ENCODE measurements at regions of chr14 and their contacts with region 1.

Region 1: DNA sequence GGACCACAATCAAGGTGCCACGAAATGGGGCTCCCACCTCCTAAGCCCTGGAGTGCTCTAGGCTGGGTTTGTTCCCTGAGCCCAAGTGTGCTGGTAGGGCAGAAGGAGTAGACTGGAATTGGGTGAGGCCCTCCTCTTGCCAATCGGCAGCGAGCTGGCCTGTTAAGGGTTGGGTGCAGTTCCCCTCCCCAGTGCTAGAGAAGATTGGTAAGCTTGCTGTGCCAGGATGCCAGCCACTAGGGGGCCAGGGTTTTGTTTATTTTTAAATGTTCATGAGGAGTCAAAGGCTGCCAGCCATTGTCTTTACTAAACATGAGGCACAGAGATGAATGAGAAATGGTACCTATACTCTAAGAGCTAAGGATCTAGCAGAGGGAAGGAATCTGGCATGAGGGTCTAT is 79.7 kb downstream of the SPTB start:
- DNase-seq: peak; percentile 53 to 62
- ATAC-seq: peak; percentile 30 to 71; a peak in 4 of 6 replicates
- H3K4me3 ChIP-seq: no peak overlapping the region
- H3K27ac ChIP-seq: peak overlapping the region; percentile 15 to 32; a peak in 1 of 6 replicates
- H3K4me1 ChIP-seq: peaks cover 17% of the 10 kb centered on the region
- CTCF ChIP-seq: peak; percentile 55
- EP300 ChIP-seq: no peak
- POLR2A ChIP-seq: no peak
- RAD21 ChIP-seq: peak in 1 of 2 experiments; percentile 30; a peak in 2 of 5 replicates

Region 2: DNA sequence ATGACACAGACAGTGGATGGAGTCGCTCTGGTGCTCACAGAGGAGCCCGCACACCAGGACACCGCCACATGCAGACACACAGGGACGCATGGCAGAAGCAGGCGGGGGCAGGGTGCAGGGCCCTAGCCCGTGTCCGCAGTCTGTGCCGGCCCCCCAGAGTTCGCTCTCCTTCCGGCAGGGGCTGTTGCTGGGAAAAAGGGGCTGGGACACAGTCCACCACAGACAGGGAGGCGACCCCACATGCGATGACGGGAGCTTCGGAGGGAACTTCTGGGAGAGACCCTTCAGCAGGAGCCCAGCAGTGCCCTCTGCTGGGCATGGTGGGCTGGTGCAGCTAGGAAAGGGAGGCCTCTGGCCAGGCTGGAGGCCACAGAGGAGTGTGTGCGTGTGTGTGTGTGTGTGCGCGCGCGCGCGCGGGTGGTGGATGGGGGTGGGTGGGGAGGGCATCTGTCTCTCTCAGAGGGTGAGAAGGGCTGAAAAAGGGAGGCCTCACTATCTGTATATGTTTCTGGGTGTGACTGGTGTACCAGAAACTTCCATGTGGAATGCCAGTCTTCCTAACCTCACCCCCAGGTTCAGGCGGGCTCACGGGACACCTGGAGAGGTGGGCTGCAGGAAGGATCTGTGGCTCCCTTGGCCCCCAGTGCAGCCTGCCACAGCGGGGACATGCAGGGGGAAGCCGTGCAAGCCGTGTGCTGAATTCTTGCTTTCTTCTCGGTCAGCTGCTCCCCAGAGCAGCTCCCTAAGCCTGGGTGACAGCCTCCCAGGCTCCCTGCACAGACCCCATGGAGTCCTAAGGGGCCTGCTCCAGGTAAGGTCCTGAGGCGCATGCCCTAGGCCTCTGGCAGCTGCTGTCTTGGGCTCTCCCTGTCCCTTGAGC is 35.1 kb before region 1 on chr14:
- CTCF ChIA-PET with region 1: interaction called, 25 read pairs
- POLR2A ChIA-PET with region 1: interaction called, 3 read pairs
- DNase-seq: peak; percentile 76 to 83
- ATAC-seq: peak; percentile 21 to 70; a peak in 4 of 6 replicates
- H3K4me3 ChIP-seq: 0 out of 3 replicates have a peak overlapping the region, but pooled peaks have one; percentile 24
- H3K27ac ChIP-seq: peak overlapping the region; percentile 92 to 93
- H3K4me1 ChIP-seq: peaks cover 64% of the 10 kb centered on the region
- CTCF ChIP-seq: peak; percentile 88
- EP300 ChIP-seq: no peak
- POLR2A ChIP-seq: no peak
- RAD21 ChIP-seq: peak; percentile 88 to 92

Region 3: GRCh38 chr14:64788668-64789067 is 11.3 kb before region 1 on chr14:
- CTCF ChIA-PET with region 1: interaction called, 139 read pairs
- POLR2A ChIA-PET with region 1: interaction called, 3 read pairs
- DNase-seq: peak; percentile 46 to 62
- ATAC-seq: peak; percentile 62 to 81; a peak in 5 of 6 replicates
- H3K4me3 ChIP-seq: no peak overlapping the region
- H3K27ac ChIP-seq: peak overlapping the region; percentile 33 to 71
- H3K4me1 ChIP-seq: peaks cover 27% of the 10 kb centered on the region
- CTCF ChIP-seq: no peak
- EP300 ChIP-seq: no peak
- POLR2A ChIP-seq: no peak
- RAD21 ChIP-seq: no peak

Region 4: DNA sequence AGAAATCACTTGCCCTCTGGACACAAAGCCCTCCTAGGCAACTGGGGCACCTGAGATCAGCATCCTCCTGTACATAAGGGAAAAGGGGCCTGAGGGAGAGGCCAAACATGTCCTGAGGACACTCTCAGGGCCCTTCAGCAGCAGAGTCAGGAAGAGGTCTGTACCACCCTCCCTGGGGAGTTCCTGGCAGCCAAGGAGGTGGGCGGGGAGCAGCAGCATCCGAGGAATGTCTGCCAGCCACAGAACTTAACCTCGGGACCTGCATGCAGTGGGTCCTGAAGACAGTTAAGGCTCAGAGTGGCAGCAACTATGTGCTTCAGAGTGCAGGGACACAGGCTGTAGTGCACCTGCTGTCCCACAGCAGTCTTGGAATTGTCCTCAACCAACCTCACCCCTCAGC is 17.6 kb after region 1 on chr14:
- CTCF ChIA-PET with region 1: interaction called, 47 read pairs
- POLR2A ChIA-PET with region 1: no interaction called
- DNase-seq: no peak
- ATAC-seq: peak in 1 of 2 experiments; percentile 31; a peak in 1 of 6 replicates
- H3K4me3 ChIP-seq: no peak overlapping the region
- H3K27ac ChIP-seq: peak overlapping the region in 1 of 2 experiments; percentile 56; a peak in 3 of 6 replicates
- H3K4me1 ChIP-seq: peaks cover 10% of the 10 kb centered on the region
- CTCF ChIP-seq: no peak
- EP300 ChIP-seq: no peak
- POLR2A ChIP-seq: no peak
- RAD21 ChIP-seq: no peak

Region 5: GRCh38 chr14:64841121-64841651 is 41.2 kb after region 1 on chr14:
- CTCF ChIA-PET with region 1: interaction called, 26 read pairs
- POLR2A ChIA-PET with region 1: no interaction called
- DNase-seq: peak; percentile 58 to 69
- ATAC-seq: peak; percentile 97
- H3K4me3 ChIP-seq: no peak overlapping the region
- H3K27ac ChIP-seq: 0 out of 6 replicates have a peak overlapping the region, but pooled peaks of 1 of the 2 experiments have one; percentile 17
- H3K4me1 ChIP-seq: peaks cover 13% of the 10 kb centered on the region; the same call in 1 of the 3 replicates
- CTCF ChIP-seq: peak; percentile 45
- EP300 ChIP-seq: no peak
- POLR2A ChIP-seq: no peak
- RAD21 ChIP-seq: peak in 1 of 2 experiments; percentile 39; a peak in 2 of 5 replicates

Region 6: GRCh38 chr14:64899958-64900357 is 100.0 kb after region 1 on chr14:
- CTCF ChIA-PET with region 1: interaction called, 27 read pairs
- POLR2A ChIA-PET with region 1: no interaction called
- DNase-seq: no peak
- ATAC-seq: no peak
- H3K4me3 ChIP-seq: no peak overlapping the region
- H3K27ac ChIP-seq: no peak overlapping the region
- H3K4me1 ChIP-seq: no peaks in the 10 kb centered on the region
- CTCF ChIP-seq: no peak
- EP300 ChIP-seq: no peak
- POLR2A ChIP-seq: no peak
- RAD21 ChIP-seq: no peak

Region 7: DNA sequence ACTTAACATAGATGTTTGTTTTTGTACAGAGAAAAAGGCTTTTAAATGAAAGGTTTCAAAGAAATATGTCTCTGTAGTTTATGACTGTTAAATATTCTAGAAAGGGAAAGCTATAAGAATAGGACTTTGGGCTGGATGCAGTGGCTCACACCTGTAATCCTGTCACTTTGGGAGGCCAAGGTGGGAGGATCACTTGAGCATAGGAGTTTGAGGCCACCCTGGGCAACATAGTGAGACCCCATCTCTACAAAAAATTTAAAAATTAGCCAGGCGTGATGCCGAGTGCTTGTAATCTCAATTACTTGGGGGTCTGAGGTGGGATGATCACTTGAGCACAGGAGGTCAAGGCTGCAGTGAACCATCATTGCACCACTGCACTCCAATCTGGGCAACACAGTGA is 131.1 kb after region 1 on chr14:
- CTCF ChIA-PET with region 1: no interaction called
- POLR2A ChIA-PET with region 1: no interaction called
- DNase-seq: no peak
- ATAC-seq: no peak
- H3K4me3 ChIP-seq: no peak overlapping the region
- H3K27ac ChIP-seq: no peak overlapping the region
- H3K4me1 ChIP-seq: peaks cover 1% of the 10 kb centered on the region; the same call in 2 of the 3 replicates
- CTCF ChIP-seq: no peak
- EP300 ChIP-seq: no peak
- POLR2A ChIP-seq: no peak
- RAD21 ChIP-seq: no peak

Measured in A549 (cell line).